Dendritic cell treated with granulocyte-macrophage colony-stimulating factor and Interleukin-4, amounts not matched to agents 40 ng/mL and 50 ng/mL, for 4 days (primary cell): ENCODE measurements at regions of chr7 and their contacts with region 1.

Region 1: DNA sequence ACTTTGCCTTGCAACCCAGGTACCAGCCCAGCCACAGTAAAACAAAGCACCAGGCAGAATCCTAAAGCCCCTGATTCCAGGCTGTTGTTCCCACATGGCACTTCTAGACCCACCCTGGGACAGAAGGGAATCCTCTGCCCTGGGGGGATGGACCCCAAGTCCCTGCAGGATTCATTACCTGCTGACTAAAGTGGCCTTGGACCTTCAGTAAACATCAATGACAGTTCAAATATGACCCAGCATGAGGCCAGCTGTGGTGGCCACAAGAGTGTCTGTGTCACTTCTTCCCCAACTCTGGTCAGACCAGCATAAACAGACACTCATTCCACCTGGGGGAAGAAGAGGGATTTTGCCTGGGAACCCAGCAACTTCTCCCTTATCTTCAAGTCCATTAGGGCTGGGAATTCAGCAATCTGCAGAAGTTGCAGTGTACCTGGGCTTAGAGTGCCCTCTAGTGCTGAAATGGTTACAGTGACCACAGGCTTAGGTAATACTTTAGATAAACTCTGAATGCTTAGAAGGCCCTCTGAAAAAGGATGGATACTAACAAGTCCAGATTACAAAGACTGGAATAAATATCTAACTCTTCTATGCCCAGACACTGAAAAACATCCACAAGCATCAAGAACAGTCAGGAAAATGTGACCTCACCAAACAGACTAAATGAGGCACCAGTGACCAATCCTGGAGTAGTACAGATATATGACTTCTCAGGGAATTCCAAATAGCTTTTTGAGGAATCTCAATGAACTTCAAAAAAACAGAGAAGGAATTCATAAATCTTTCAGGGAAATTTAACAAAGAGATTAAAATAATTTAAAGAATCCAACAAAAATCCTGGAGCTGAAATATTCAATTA is 108.5 kb upstream of the TMEM168 start:
- H3K4me3 Mint-ChIP-seq: no peak overlapping the region
- H3K27ac Mint-ChIP-seq: no peak overlapping the region
- H3K4me1 Mint-ChIP-seq: peaks cover 6% of the 10 kb centered on the region
- H3K27me3 Mint-ChIP-seq: no peaks in the 10 kb centered on the region

Region 2: DNA sequence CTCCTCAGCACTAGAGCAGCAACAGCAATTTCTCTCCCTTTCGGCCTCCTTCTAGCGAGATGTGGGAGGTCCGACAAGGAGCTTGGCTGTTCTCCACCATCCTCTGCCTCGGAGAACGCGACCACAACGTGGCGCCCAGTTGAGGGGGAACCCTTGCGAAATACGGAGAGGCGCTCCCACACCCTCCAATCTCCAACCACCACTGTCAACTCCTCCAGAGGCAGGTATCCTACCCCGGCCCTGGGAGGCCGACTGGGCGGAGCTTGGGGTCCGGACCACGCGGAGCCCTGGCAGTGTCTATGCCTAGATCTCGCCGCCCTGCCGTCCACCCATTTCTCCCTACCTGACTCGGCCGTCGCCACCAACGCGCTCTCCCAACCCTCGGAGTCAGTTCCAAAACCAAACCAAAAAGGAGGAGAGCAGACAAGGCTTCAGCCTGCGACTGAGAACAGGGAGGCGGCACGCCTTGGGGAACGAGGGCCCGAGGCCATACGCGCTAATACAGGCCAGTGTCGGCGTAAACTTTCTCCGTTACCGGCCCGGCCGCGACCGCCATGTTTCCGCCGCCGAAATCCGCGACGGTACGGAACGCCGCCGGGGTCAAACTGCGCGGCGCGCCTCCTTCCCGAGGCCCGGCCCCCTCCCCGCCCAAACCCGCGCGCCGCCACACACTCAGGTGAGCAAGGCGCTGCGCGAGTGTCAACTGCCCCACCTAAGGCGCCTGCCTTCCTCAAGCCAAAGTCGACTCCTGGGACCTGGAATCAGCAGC is 108.7 kb before region 1 on chr7 and contains the start of gene TMEM168:
- intact Hi-C with region 1: loop called (anchors 5 kb)
- H3K4me3 Mint-ChIP-seq: peak within 1 kb of the TSS; percentile 88
- H3K27ac Mint-ChIP-seq: peak within 1 kb of the TSS; percentile 93
- H3K4me1 Mint-ChIP-seq: peaks cover 19% of the 10 kb centered on the region
- H3K27me3 Mint-ChIP-seq: no peaks in the 10 kb centered on the region